Caco-2 (cell line): ENCODE measurements at regions of chrX and their contacts with region 1.

Region 1: GRCh38 chrX:73867144-73867543 is 304.1 kb downstream of the CHIC1 start:
- DNase-seq: no peak
- H3K4me3 ChIP-seq: no peak overlapping the region
- H3K4me3 Mint-ChIP-seq: no peak overlapping the region
- H3K27ac Mint-ChIP-seq: no peak overlapping the region
- H3K4me1 ChIP-seq: no peaks in the 10 kb centered on the region
- H3K4me1 Mint-ChIP-seq: no peaks in the 10 kb centered on the region
- H3K27me3 ChIP-seq: no peaks in the 10 kb centered on the region
- H3K27me3 Mint-ChIP-seq: no peaks in the 10 kb centered on the region
- CTCF ChIP-seq: no peak

Region 2: DNA sequence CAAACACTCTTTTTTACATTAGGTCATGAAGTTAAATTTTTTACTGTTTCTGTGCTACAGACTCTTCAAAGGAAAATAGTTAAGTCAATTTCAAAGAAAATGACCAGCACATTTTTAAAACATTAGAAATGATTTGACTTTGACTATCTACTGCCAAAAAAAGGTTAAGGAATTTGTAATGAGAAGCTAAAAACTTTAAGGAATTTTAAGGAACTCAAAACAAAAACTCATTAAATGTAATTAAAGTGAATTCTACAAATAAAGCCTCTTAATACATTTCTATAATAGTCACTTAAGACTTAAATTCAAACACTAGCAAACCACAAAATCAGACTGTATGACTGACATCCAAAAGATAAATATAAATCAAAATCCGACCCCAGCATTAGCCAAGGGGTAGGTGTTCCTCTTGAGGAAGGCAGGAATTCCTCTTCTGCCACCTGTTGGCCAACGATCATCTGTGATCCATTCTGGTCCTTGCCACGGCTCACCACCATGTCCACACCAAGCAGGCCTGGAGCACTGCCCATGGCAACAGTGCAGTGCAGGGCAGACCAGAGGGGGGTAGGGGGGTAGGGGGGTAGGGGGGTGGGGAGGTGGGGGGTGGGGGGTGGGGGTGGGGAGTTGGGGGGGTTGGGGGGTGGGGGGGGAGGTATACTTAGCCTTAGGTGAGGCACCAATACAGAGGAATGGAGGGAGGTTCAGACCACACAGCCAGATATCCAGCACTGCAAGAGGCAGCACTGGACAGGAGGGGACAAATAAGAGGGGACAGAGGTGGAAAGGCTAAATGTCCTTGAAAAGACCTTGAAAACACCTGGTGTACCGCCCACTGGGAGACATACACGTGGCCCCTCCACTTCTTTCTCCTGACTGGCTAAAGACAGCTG is 16.8 kb before region 1 on chrX:
- CTCF ChIA-PET with region 1: no interaction called
- POLR2A ChIA-PET with region 1: no interaction called
- intact Hi-C with region 1: no loop called
- DNase-seq: peak in 1 of 2 experiments; percentile 8
- H3K4me3 ChIP-seq: no peak overlapping the region
- H3K4me3 Mint-ChIP-seq: no peak overlapping the region
- H3K27ac Mint-ChIP-seq: no peak overlapping the region
- H3K4me1 ChIP-seq: no peaks in the 10 kb centered on the region
- H3K4me1 Mint-ChIP-seq: no peaks in the 10 kb centered on the region
- H3K27me3 ChIP-seq: no peaks in the 10 kb centered on the region
- H3K27me3 Mint-ChIP-seq: no peaks in the 10 kb centered on the region
- CTCF ChIP-seq: peak in 1 of 2 experiments; percentile 18

Region 3: DNA sequence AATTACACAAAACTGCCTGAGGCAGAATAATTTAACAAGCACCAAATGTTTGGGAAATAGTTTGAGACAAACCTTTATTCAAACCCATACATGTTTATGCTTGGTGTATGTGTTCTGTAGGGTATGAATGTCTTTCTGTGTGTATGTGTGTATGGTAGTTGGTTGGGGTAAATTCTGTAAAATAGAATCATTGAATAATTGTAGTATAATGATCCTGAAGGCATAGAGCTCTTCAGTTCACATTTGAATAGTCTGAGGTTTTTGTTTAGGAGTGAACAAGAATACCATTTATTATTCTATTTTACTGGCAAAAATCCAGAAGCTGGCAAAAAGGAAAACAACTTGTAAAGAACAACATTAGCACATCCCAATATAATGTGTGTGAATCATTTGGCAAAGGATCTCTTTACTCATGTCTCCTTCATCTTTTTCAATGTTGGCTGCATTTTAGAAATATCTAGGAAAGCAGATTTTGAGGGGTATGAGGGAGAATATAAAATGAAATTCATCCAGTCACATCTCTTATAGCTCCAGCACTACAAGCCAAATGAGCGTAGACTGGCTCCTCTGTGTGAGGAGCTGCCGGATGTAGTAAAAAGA is 55.8 kb after region 1 on chrX:
- CTCF ChIA-PET with region 1: no interaction called
- POLR2A ChIA-PET with region 1: no interaction called
- intact Hi-C with region 1: no loop called
- DNase-seq: no peak
- H3K4me3 ChIP-seq: no peak overlapping the region
- H3K4me3 Mint-ChIP-seq: no peak overlapping the region
- H3K27ac Mint-ChIP-seq: no peak overlapping the region
- H3K4me1 ChIP-seq: peaks cover 11% of the 10 kb centered on the region
- H3K4me1 Mint-ChIP-seq: peaks cover 4% of the 10 kb centered on the region
- H3K27me3 ChIP-seq: no peaks in the 10 kb centered on the region
- H3K27me3 Mint-ChIP-seq: no peaks in the 10 kb centered on the region
- CTCF ChIP-seq: no peak

Region 4: DNA sequence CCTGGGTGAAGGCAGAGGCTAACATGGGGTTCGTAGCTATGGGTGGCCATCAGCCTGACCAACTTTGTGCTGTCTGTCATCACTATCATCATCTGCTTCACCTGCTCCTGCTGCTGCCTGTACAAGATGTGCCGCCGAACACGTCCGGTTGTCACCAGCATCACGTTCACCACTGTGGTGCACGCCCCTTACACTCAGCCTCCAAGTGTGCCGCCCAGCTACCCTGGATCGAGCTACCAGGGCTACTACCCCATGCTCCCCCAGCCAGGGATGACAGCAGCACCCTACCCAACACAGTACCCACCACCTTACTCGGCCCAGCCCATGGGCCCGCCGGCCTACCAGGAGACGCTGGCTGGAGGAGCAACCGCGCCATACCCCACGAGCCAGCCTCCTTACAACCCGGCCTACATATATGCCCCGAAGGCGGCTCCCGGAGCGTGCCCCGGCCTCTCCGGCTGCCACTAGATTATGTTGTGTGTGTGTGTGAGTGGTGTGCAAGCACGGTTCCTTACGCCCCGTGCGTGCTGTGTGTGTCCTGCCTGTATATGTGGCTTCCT is 198.8 kb after region 1 on chrX:
- CTCF ChIA-PET with region 1: no interaction called
- POLR2A ChIA-PET with region 1: no interaction called
- intact Hi-C with region 1: no loop called
- DNase-seq: no peak
- H3K4me3 ChIP-seq: no peak overlapping the region
- H3K4me3 Mint-ChIP-seq: no peak overlapping the region
- H3K27ac Mint-ChIP-seq: no peak overlapping the region
- H3K4me1 ChIP-seq: no peaks in the 10 kb centered on the region
- H3K4me1 Mint-ChIP-seq: no peaks in the 10 kb centered on the region
- H3K27me3 ChIP-seq: no peaks in the 10 kb centered on the region
- H3K27me3 Mint-ChIP-seq: no peaks in the 10 kb centered on the region
- CTCF ChIP-seq: no peak

Region 5: GRCh38 chrX:74232859-74233258 is 365.7 kb after region 1 on chrX:
- CTCF ChIA-PET with region 1: no interaction called
- POLR2A ChIA-PET with region 1: no interaction called
- intact Hi-C with region 1: loop called (anchors 5 kb)
- DNase-seq: no peak
- H3K4me3 ChIP-seq: no peak overlapping the region
- H3K4me3 Mint-ChIP-seq: no peak overlapping the region
- H3K27ac Mint-ChIP-seq: no peak overlapping the region
- H3K4me1 ChIP-seq: no peaks in the 10 kb centered on the region
- H3K4me1 Mint-ChIP-seq: no peaks in the 10 kb centered on the region
- H3K27me3 ChIP-seq: no peaks in the 10 kb centered on the region
- H3K27me3 Mint-ChIP-seq: no peaks in the 10 kb centered on the region
- CTCF ChIP-seq: no peak